ENCODE measurements at regions of chr1 and their contacts with region 1.

Region 1: DNA sequence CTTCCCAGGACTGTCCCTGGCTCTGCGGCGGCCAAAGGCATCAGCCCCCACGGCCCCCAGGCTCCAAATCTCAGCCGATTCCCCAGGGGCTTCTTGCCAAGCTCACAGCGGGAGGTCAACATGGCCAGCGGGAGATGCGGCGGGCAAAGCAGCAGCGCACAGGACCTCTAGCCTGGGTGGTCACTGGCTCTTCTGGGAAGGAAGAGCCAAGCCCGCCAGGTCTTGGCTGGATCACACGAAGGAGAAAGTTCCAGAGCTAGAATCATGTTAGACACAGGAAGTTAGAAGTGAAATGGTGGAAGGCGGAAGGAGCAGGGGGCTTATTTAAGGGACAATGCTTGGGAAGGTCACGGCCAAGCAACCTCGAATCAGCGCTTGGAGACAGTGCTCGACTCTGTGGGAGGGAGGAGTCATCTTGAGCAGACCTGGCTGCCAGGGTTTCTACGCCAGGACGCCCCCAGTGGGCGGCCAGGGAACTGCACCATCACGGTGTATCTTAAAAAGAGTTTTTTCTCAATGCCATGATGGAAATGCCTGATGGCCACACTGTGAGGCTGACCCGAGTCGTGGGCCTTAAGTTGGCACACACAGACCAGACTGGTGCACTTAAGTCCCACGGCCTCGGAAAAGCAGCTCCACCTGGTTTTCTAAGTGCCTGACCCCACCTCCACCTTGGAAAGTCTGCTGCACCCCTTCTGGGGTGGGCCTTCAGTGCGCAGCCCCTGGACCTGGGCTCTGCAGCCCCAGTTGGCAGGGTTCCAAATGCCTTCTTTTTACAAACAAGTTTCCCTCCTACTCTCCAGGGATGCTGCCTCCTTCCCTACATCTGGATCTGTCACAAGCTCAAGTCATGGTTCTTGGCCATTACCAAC is 29.3 kb downstream of the SLC66A1 start:
- DNase-seq: peak; percentile 54 to 75 (median 61)
- H3K4me3 ChIP-seq: no peak overlapping the region
- H3K4me3 Mint-ChIP-seq: peak overlapping the region in 1 of 7 donors; percentile 40
- H3K27ac ChIP-seq: no peak overlapping the region
- H3K27ac Mint-ChIP-seq: peak overlapping the region; percentile 47 to 93 (median 73)
- H3K4me1 ChIP-seq: no peaks in the 10 kb centered on the region
- H3K4me1 Mint-ChIP-seq: peaks cover 2 to 19% (median 5%) of the 10 kb centered on the region in 3 donors
- H3K27me3 ChIP-seq: no peaks in the 10 kb centered on the region
- H3K27me3 Mint-ChIP-seq: peaks cover 0 to 1% of the 10 kb centered on the region in 2 donors

Region 2: GRCh38 chr1:19628879-19629278 is 287.4 kb after region 1 on chr1:
- CTCF ChIA-PET with region 1: no interaction called
- POLR2A ChIA-PET with region 1: no interaction called
- DNase-seq: no peak
- H3K4me3 ChIP-seq: no peak overlapping the region
- H3K4me3 Mint-ChIP-seq: no peak overlapping the region
- H3K27ac ChIP-seq: no peak overlapping the region
- H3K27ac Mint-ChIP-seq: no peak overlapping the region
- H3K4me1 ChIP-seq: no peaks in the 10 kb centered on the region
- H3K4me1 Mint-ChIP-seq: no peaks in the 10 kb centered on the region
- H3K27me3 ChIP-seq: no peaks in the 10 kb centered on the region
- H3K27me3 Mint-ChIP-seq: no peaks in the 10 kb centered on the region

Region 3: DNA sequence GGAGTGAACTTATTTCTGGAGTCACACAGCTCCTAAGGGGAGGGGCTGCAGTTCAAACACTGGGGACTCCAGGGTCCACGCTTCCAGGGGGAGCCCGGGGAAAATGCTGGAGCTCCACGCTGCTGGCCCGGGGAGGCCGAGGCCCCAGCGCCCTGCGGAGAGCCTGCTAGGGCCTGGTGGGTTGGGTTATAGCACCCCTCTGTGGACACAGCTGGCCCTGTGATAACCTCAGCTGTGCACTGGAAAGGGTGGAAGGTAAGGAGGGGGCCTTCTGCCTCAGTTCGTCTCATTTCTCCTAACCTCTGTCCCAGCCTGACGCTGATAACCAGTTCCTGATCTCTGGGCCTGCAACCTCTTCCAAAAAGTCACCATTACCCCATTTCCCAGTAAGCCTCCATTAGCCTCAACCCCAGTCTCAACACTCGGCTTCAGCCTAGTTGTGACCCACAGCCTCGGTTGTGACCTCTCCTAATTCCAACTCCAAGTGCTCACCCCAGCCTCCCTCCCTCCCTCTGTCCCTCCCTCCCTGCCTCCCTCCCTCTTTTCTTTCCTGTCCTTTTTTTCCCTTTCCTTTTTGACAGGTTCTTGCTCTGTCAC is 309.8 kb after region 1 on chr1:
- CTCF ChIA-PET with region 1: interaction called, 11 read pairs
- POLR2A ChIA-PET with region 1: no interaction called
- DNase-seq: peak in 3 of 5 donors; percentile 28 to 62 (median 45)
- H3K4me3 ChIP-seq: no peak overlapping the region
- H3K4me3 Mint-ChIP-seq: no peak overlapping the region
- H3K27ac ChIP-seq: no peak overlapping the region
- H3K27ac Mint-ChIP-seq: peak overlapping the region in 1 of 8 donors; percentile 8
- H3K4me1 ChIP-seq: peaks cover 12% of the 10 kb centered on the region
- H3K4me1 Mint-ChIP-seq: peaks cover 12 to 35% (median 18%) of the 10 kb centered on the region in 3 donors
- H3K27me3 ChIP-seq: no peaks in the 10 kb centered on the region
- H3K27me3 Mint-ChIP-seq: peaks cover 0 to 4% of the 10 kb centered on the region in 2 donors